Heart left ventricle (tissue), 16 donors: ENCODE measurements at regions of chr7 and their contacts with region 1.

Region 1: GRCh38 chr7:332646-333392 is 42.8 kb downstream of the FOXL3 start:
- DNase-seq: peak; percentile 76 to 92 (median 81)
- ATAC-seq: peak; percentile 75 to 94 (median 88)
- H3K4me3 ChIP-seq: peak overlapping the region; percentile 5 to 58 (median 50)
- H3K27ac ChIP-seq: peak overlapping the region; percentile 32 to 90 (median 74)
- H3K4me1 ChIP-seq: peaks cover 0 to 16% (median 12%) of the 10 kb centered on the region in 12 donors
- H3K27me3 ChIP-seq: peaks cover 0 to 6% (median 0%) of the 10 kb centered on the region in 9 donors
- CTCF ChIP-seq: peak; percentile 83 to 95 (median 88)
- POLR2A ChIP-seq: no peak

Region 2: GRCh38 chr7:276230-276835 is 56.5 kb before region 1 on chr7:
- intact Hi-C with region 1: no loop called
- DNase-seq: peak in 3 of 5 donors; percentile 3 to 53 (median 4)
- ATAC-seq: no peak
- H3K4me3 ChIP-seq: no peak overlapping the region
- H3K27ac ChIP-seq: no peak overlapping the region
- H3K4me1 ChIP-seq: no peaks in the 10 kb centered on the region
- H3K27me3 ChIP-seq: no peaks in the 10 kb centered on the region
- CTCF ChIP-seq: no peak
- POLR2A ChIP-seq: no peak

Region 3: DNA sequence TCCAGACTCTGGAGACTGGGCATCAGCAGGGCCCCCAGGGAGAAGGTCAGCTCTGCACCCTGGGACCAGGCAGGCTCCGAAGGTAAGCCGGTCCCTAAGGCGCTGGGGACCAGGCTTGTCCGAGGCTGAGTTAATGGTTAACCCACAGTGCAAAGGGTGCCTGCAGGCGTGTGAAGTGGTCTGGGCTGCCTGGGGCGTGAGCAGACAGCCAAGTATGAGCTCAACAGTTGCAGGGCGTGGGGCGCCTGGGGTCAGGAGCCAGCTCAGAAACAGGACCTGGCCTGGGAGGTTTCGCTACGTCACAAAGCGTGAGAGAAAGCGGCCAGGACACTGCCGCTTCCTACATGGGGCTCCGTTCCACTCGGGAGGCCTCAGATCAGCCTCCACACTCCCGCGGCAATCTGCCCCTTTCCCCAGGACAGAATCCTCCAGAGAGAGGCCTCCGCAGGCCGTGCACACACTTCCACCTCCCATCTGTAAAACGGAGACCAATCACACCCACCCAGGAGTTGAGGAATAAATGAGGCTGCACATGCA is 170.8 kb after region 1 on chr7:
- intact Hi-C with region 1: loop called in 1 of 10 experiments (anchors 5 kb)
- DNase-seq: peak; percentile 54 to 79 (median 76)
- ATAC-seq: peak; percentile 76 to 85 (median 82)
- H3K4me3 ChIP-seq: no peak overlapping the region
- H3K27ac ChIP-seq: peak overlapping the region in 8 of 12 donors; percentile 32 to 70 (median 44)
- H3K4me1 ChIP-seq: peaks cover 0 to 34% (median 18%) of the 10 kb centered on the region in 12 donors
- H3K27me3 ChIP-seq: no peaks in the 10 kb centered on the region
- CTCF ChIP-seq: no peak
- POLR2A ChIP-seq: no peak

Region 4: GRCh38 chr7:636396-636795 is 303.6 kb after region 1 on chr7:
- intact Hi-C with region 1: loop called in 8 of 10 experiments (anchors 2 to 10 kb)
- DNase-seq: peak in 1 of 5 donors; percentile 46
- ATAC-seq: peak in 3 of 4 donors; percentile 54 to 69 (median 67)
- H3K4me3 ChIP-seq: no peak overlapping the region
- H3K27ac ChIP-seq: no peak overlapping the region
- H3K4me1 ChIP-seq: no peaks in the 10 kb centered on the region
- H3K27me3 ChIP-seq: no peaks in the 10 kb centered on the region
- CTCF ChIP-seq: peak in 11 of 12 donors; percentile 31 to 62 (median 42)
- POLR2A ChIP-seq: no peak

Region 5: GRCh38 chr7:732094-732541 is 399.3 kb after region 1 on chr7:
- intact Hi-C with region 1: loop called in 5 of 10 experiments (anchors 1 to 5 kb)
- DNase-seq: peak; percentile 48 to 81 (median 75)
- ATAC-seq: peak; percentile 77 to 87 (median 80)
- H3K4me3 ChIP-seq: no peak overlapping the region
- H3K27ac ChIP-seq: peak overlapping the region; percentile 29 to 93 (median 84)
- H3K4me1 ChIP-seq: peaks cover 3 to 41% (median 25%) of the 10 kb centered on the region in 12 donors
- H3K27me3 ChIP-seq: no peaks in the 10 kb centered on the region
- CTCF ChIP-seq: peak in 10 of 12 donors; percentile 22 to 62 (median 46)
- POLR2A ChIP-seq: no peak

Region 6: GRCh38 chr7:774161-775109 is 441.6 kb after region 1 on chr7:
- intact Hi-C with region 1: loop called in 2 of 10 experiments (anchors 1 to 2 kb)
- DNase-seq: peak in 3 of 5 donors; percentile 52 to 61 (median 52)
- ATAC-seq: peak in 3 of 4 donors; percentile 24 to 64 (median 44)
- H3K4me3 ChIP-seq: no peak overlapping the region
- H3K27ac ChIP-seq: no peak overlapping the region
- H3K4me1 ChIP-seq: peaks cover 0 to 34% (median 20%) of the 10 kb centered on the region in 12 donors
- H3K27me3 ChIP-seq: no peaks in the 10 kb centered on the region
- CTCF ChIP-seq: peak; percentile 82 to 97 (median 92)
- POLR2A ChIP-seq: no peak